ENCODE measurements at regions of chr21 and their contacts with region 1.

Region 1: DNA sequence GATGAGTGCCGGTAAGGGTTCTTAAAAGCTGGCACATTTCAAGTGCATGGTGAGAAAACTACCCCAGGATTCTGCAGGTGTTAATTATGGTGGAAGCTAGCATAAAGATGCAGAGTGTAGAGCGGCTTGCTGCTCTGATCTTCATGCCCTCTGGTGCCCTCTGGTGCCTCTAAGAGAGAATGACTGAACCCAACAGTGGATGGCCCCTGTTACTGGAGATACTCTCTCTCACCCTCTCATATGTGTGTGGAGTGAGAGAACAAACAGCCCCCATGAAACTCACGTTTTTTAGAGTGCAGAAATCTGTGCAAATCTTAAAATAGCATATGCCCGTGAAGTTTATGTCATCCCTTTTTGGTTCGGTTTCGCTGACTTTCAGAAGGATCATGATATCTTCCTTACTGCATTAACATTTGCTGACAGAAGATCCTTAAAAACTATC is 90.0 kb downstream of the GRIK1 start:
- DNase-seq: peak in 1 of 2 donors; percentile 43
- ATAC-seq: peak; percentile 88

Region 2: DNA sequence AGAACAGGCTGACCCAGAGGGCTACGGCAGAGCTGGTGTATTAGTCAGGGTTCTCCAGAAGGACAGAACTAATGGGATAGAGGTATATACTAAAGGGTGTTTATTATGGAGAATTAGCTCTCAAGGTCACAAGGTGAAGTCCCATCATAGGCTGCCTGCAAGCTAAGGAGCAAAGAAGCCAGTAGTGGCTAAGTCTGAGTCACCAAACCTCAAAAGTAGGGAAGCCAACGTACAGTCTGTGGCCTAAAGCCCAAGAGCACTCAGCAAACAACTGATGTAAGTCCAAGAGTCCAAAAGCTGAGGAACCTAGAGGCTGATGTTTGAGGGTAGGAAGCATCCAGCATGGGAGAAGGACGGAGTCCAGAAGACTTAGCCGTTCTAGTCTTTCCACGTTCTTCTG is 371.8 kb before region 1 on chr21:
- intact Hi-C with region 1: loop called in 1 of 2 experiments (anchors 5 kb)
- DNase-seq: no peak
- ATAC-seq: no peak

Region 3: DNA sequence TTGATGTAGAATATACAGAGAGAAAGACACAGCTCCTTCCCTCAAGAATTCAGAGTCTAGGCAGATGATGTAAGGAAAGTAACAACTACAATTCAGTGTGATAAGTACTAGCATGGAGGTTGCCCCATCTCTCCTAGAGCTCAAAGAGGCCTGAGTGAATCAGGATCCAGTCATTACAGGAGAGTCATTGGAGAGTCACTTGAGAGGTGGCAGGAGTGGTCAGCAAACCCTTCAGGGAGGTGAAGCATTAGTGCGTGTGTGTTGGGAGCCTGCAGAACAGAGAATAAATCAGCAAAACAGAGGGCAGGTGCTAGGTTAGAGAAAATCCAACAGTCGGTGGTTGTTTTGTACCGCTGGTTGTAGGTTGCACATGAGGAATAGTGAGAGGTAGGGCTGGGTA is 43.9 kb after region 1 on chr21:
- intact Hi-C with region 1: no loop called
- DNase-seq: no peak
- ATAC-seq: no peak

Measured in left colon (tissue), 2 donors.